Prostate gland (tissue), 2 donors: ENCODE measurements at regions of chr18 and their contacts with region 1.

Region 1: DNA sequence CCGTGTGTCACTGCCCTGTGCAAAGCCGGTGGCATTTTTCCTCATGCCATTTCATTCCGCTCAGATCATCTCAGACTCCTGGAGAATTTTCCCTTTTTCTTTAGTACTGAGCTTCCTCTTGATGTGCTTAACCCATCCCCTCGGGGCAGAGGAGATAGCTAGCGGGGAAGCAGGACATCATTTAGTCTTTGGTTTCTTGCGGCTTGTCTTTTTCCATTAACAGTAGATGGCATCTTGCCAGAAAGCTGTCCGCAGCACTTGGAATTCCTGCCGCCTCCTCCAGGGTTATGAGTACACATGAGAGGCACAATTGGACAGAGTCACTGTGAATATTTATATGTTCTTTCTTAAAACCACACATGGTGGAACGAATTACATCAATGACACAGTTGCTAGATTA is 226.6 kb downstream of the ALPK2 start:
- DNase-seq: peak; percentile 64
- H3K4me3 ChIP-seq: no peak overlapping the region
- H3K27ac ChIP-seq: peak overlapping the region in 1 of 2 donors; percentile 42
- H3K4me1 ChIP-seq: peaks cover 6% of the 10 kb centered on the region
- H3K27me3 ChIP-seq: no peaks in the 10 kb centered on the region
- CTCF ChIP-seq: peak in 2 of 4 experiments; percentile 18 to 43
- POLR2A ChIP-seq: no peak

Region 2: DNA sequence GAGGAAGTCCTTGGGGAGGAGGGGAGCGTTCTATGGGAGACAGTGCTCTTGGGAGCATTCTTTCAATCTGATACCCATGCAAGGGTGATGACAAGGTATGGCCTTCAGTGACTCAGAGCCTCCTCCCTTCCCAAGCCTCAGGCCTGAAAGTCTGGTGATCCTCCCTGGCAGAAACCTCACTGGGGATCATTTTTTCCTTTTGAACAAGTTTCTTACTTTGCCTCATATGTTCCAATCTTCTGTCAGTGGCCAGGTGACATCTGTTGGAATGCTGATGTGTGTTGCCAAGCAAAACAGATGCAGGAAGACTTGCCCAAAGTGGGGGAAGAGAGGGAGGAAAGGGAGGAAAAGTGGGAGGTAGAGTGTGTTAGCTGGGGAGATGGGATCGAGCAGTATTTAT is 133.4 kb before region 1 on chr18:
- intact Hi-C with region 1: no loop called
- DNase-seq: no peak
- H3K4me3 ChIP-seq: no peak overlapping the region
- H3K27ac ChIP-seq: peak overlapping the region; percentile 47 to 67
- H3K4me1 ChIP-seq: peaks cover 16% of the 10 kb centered on the region
- H3K27me3 ChIP-seq: no peaks in the 10 kb centered on the region
- CTCF ChIP-seq: no peak
- POLR2A ChIP-seq: no peak

Region 3: GRCh38 chr18:58484989-58485981 is 83.0 kb after region 1 on chr18:
- intact Hi-C with region 1: loop called (anchors 5 kb)
- DNase-seq: peak; percentile 21
- H3K4me3 ChIP-seq: no peak overlapping the region
- H3K27ac ChIP-seq: no peak overlapping the region
- H3K4me1 ChIP-seq: no peaks in the 10 kb centered on the region
- H3K27me3 ChIP-seq: no peaks in the 10 kb centered on the region
- CTCF ChIP-seq: peak in 1 of 4 experiments; percentile 38
- POLR2A ChIP-seq: no peak